H1 (cell line): ENCODE measurements at regions of chr20 and their contacts with region 1.

Region 1: DNA sequence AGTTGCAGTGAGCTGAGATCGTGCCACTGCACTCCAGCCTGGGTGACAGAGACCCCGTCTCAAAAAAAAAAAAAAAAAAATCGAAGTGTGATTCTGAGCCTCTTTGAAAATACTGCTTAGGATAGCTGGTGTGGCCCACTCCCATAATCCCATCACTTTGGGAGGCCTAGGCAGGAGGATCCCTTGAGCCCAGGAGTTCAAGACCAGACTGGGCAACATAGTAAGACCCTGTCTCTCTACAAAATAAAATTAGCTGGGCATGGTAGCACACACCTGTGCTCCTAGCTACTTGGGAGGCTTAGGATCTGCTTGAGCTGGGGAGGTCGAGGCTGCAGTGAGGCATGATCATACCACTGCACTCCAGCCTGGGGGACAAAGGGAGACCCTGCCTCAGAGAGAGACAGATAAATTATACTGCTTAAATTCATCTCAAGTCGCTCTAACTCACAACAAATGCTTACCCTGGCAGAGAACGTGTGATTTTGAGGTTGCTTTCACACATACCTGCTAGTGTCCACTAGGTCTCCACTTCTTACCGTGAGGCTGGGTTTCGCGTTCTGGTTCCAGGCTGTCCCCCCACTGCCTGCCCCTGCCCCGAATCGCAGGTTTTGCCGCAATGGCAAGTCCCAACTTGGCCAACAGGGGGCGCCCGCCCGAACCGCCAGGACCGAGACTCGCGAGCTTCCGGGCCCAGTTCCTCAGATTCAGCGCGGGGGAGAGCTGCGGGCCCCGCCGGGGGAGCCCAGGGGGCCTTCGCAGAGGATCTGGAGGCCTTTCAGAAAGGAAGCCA is 12.3 kb upstream of the TMC2 start:
- DNase-seq: peak; percentile 49 to 99
- H3K4me3 ChIP-seq: peak overlapping the region; percentile 58 to 82 (median 74)
- H3K27ac ChIP-seq: no peak overlapping the region
- H3K4me1 ChIP-seq: no peaks in the 10 kb centered on the region
- H3K27me3 ChIP-seq: peaks cover 4 to 55% (median 37%) of the 10 kb centered on the region in 4 experiments
- CTCF ChIP-seq: peak; percentile 83 to 92 (median 92)
- EP300 ChIP-seq: 0 out of 3 replicates have a peak, but pooled peaks of 1 of the 2 experiments have one; percentile 14
- POLR2A ChIP-seq: peak in 1 of 2 experiments; percentile 47; a peak in 1 of 3 replicates
- RAD21 ChIP-seq: peak; percentile 49 to 63

Region 2: DNA sequence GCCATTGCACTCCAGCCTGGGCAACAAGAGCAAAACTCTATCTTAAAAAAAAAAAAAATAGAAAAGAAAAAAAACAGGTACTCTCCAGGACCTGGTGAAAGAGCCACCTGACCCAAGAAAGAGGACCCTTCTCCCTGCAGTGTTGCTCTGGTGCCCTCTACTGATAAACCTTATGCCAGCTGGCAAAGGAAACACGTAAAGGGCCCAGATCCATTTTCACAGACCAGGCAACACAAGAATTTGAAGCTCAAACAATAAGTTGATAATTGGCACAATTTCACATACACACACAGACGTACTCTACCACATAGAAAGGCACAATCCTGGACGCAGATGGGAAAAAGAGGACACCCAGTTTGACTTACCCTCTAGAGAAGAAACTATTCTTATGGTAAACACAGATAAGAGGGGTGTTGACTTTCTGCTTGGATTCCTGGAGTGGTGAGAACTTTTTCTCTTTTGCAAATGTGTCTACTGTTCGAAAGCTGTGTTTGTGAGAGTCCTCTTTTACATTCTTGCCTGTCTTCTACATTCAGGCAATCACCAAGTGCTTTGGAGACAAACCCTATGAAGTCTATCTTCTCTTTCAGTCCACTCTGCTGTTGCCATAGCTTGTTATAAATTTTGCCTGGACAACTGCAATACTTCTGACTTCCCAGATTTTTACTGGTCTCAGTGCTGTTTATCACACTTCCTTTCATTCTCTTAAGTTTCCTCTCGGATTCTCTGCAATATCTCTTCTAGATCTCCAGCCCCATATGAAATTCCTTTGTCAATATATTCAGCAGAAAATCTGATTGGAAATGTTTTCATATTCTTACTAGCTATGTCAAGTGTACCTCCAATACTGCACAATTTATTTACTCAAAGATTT is 47.1 kb before region 1 on chr20:
- CTCF ChIA-PET with region 1: interaction called, 15 read pairs
- POLR2A ChIA-PET with region 1: no interaction called
- DNase-seq: no peak
- H3K4me3 ChIP-seq: no peak overlapping the region
- H3K27ac ChIP-seq: no peak overlapping the region
- H3K4me1 ChIP-seq: no peaks in the 10 kb centered on the region
- H3K27me3 ChIP-seq: no peaks in the 10 kb centered on the region; a peak in 1 of 7 replicates
- CTCF ChIP-seq: peak; percentile 8 to 55 (median 48)
- EP300 ChIP-seq: no peak
- POLR2A ChIP-seq: no peak
- RAD21 ChIP-seq: peak; percentile 54 to 60

Region 3: GRCh38 chr20:2538931-2539720 is 15.0 kb after region 1 on chr20:
- CTCF ChIA-PET with region 1: interaction called, 35 read pairs
- POLR2A ChIA-PET with region 1: no interaction called
- DNase-seq: no peak
- H3K4me3 ChIP-seq: no peak overlapping the region
- H3K27ac ChIP-seq: no peak overlapping the region
- H3K4me1 ChIP-seq: peaks cover 0 to 9% (median 0%) of the 10 kb centered on the region in 4 experiments; a peak in 2 of 7 replicates
- H3K27me3 ChIP-seq: peaks cover 0 to 3% (median 0%) of the 10 kb centered on the region in 4 experiments; a peak in 1 of 7 replicates
- CTCF ChIP-seq: no peak
- EP300 ChIP-seq: no peak
- POLR2A ChIP-seq: no peak
- RAD21 ChIP-seq: no peak

Region 4: DNA sequence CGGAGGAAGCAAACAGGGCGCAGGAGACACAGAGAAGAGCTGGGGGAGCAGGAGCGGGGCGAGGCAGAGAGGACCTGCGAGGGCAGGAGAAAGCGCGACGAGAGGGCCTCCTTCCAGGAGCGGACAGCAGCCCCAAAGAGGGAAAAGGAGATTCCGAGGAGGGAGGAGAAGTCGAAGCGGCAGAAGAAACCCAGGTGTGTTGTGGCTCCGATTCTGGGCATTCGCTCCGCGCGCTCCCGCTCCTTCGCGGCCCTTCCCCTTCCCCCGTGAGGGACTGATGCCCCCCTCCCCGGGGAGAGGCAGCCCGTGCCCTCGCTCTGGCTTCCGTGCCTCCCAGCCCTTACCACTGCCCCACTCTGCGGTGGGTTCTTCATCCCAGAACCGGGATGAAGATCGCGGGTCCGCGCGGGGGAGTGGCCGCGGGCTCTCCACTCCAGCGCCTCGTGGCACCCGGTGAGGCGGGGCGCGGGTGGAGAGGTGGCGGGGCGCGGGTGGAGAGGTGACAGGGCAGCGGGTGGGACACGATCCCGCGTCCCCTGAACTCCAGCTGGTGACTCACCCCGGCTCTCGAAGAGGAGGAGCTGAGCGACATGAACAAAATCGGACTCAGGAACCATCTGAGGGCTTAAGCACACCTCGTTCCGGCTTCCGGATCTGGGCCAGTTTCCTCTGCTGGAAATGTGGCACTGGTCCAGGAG is 34.6 kb after region 1 on chr20:
- CTCF ChIA-PET with region 1: interaction called, 10 read pairs
- POLR2A ChIA-PET with region 1: no interaction called
- DNase-seq: peak in 1 of 2 experiments; percentile 61
- H3K4me3 ChIP-seq: peak overlapping the region; percentile 27 to 69 (median 40)
- H3K27ac ChIP-seq: no peak overlapping the region
- H3K4me1 ChIP-seq: peaks cover 0 to 3% (median 1%) of the 10 kb centered on the region in 4 experiments; a peak in 3 of 7 replicates
- H3K27me3 ChIP-seq: peaks cover 25 to 33% (median 31%) of the 10 kb centered on the region in 4 experiments
- CTCF ChIP-seq: no peak
- EP300 ChIP-seq: no peak
- POLR2A ChIP-seq: no peak
- RAD21 ChIP-seq: no peak

Region 5: DNA sequence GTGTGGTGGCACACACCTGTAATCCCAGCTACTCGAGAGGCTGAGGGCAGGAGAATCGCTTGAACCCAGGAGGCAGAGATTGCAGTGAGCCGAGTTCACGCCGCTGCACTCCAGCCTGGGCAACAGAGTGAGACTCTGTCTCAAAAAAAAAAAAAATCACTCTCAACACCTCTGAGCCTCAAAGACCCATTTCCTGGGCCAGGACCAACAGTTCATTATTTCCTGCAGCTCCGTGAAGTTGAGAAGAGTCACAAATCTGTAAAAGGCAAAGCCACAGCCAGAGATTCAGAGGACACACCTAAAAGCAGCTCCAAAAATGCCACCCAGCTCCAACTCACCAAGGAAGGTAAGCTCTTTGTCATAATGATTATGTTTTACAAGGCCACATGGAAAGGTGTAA is 113.1 kb after region 1 on chr20:
- CTCF ChIA-PET with region 1: interaction called, 20 read pairs
- POLR2A ChIA-PET with region 1: no interaction called
- DNase-seq: no peak
- H3K4me3 ChIP-seq: no peak overlapping the region
- H3K27ac ChIP-seq: no peak overlapping the region
- H3K4me1 ChIP-seq: no peaks in the 10 kb centered on the region
- H3K27me3 ChIP-seq: no peaks in the 10 kb centered on the region; a peak in 2 of 7 replicates
- CTCF ChIP-seq: no peak
- EP300 ChIP-seq: no peak
- POLR2A ChIP-seq: no peak
- RAD21 ChIP-seq: no peak